ENCODE measurements at regions of chr17 and their contacts with region 1.

Region 1: DNA sequence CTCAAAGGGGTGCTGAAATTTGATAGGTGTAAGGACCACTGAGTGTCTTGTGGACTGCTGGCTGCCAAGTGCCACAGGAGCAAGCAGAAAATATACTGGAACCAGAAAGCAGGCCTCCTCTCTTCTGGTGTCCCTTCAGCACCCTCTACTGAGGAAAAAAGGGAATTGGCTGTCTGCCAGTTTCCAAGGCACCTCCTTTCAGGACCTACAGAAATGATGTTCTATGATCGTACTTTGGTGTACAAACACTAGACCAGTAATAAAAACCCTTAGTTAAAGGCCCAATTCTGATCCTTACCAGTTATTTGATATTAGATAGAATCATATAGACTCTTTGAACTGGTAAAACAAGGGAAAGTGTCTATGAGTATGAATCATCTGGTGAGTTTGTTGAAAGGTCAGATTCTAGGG is 35.8 kb upstream of the BCAS3 start:
- DNase-seq: peak; percentile 57 to 66
- H3K4me3 ChIP-seq: no peak overlapping the region
- H3K27ac ChIP-seq: no peak overlapping the region
- H3K4me1 ChIP-seq: peaks cover 0 to 13% of the 10 kb centered on the region in 2 donors
- H3K27me3 ChIP-seq: no peaks in the 10 kb centered on the region
- CTCF ChIP-seq: peak in 3 of 6 experiments; percentile 35 to 53 (median 43)
- POLR2A ChIP-seq: no peak

Region 2: GRCh38 chr17:60473788-60474187 is 168.0 kb before region 1 on chr17:
- intact Hi-C with region 1: loop called (anchors 5 kb)
- DNase-seq: no peak
- H3K4me3 ChIP-seq: no peak overlapping the region
- H3K27ac ChIP-seq: no peak overlapping the region
- H3K4me1 ChIP-seq: peaks cover 12 to 14% of the 10 kb centered on the region in 2 donors
- H3K27me3 ChIP-seq: no peaks in the 10 kb centered on the region
- CTCF ChIP-seq: no peak
- POLR2A ChIP-seq: no peak

Region 3: GRCh38 chr17:60577147-60577915 is 64.5 kb before region 1 on chr17:
- intact Hi-C with region 1: loop called (anchors 10 kb)
- DNase-seq: peak; percentile 7 to 14
- H3K4me3 ChIP-seq: no peak overlapping the region
- H3K27ac ChIP-seq: peak overlapping the region; percentile 5 to 68 (median 25)
- H3K4me1 ChIP-seq: peaks cover 3 to 8% of the 10 kb centered on the region in 2 donors
- H3K27me3 ChIP-seq: no peaks in the 10 kb centered on the region
- CTCF ChIP-seq: peak in 1 of 6 experiments; percentile 17
- POLR2A ChIP-seq: no peak

Region 4: GRCh38 chr17:60677308-60678124 is 35.7 kb after region 1 on chr17 and contains the start of gene BCAS3:
- intact Hi-C with region 1: no loop called
- DNase-seq: peak; percentile 99
- H3K4me3 ChIP-seq: peak within 1 kb of the TSS; percentile 60 to 91 (median 83)
- H3K27ac ChIP-seq: peak within 1 kb of the TSS; percentile 51 to 67 (median 62)
- H3K4me1 ChIP-seq: peaks cover 3 to 14% of the 10 kb centered on the region in 2 donors
- H3K27me3 ChIP-seq: no peaks in the 10 kb centered on the region
- CTCF ChIP-seq: no peak
- POLR2A ChIP-seq: peak; percentile 19 to 88
- total RNA-seq, gene BCAS3: 41.8 to 78.7 (median 51.6) TPM